Dendritic cell treated with granulocyte-macrophage colony-stimulating factor and Interleukin-4, amounts not matched to agents 40 ng/mL and 50 ng/mL, for 4 days (primary cell): ENCODE measurements at regions of chr5 and their contacts with region 1.

Region 1: GRCh38 chr5:66739951-66740350 is 143.8 kb downstream of the MAST4 start:
- H3K4me3 Mint-ChIP-seq: no peak overlapping the region
- H3K27ac Mint-ChIP-seq: no peak overlapping the region
- H3K4me1 Mint-ChIP-seq: peaks cover 72% of the 10 kb centered on the region
- H3K27me3 Mint-ChIP-seq: no peaks in the 10 kb centered on the region

Region 2: DNA sequence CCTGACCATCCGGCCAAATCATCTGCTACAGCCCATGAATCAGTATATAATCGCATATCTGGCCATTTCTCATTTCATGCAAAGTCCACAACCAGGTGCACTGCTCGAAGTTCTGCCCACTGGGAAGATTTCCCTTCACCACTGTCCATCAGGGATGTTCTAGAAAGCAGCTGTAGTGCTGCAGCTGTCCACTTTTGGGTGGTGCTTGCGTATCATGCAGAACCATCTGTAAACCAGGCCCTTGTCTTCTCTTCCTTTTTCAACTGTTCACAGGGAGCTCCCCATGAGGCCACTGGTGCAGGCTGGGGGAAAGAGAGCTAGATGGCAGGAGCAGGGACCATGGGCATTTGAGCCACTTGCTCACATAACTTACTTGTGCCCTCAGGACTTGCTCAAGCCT is 1250.8 kb before region 1 on chr5:
- intact Hi-C with region 1: no loop called
- H3K4me3 Mint-ChIP-seq: no peak overlapping the region
- H3K27ac Mint-ChIP-seq: no peak overlapping the region
- H3K4me1 Mint-ChIP-seq: no peaks in the 10 kb centered on the region
- H3K27me3 Mint-ChIP-seq: no peaks in the 10 kb centered on the region

Region 3: DNA sequence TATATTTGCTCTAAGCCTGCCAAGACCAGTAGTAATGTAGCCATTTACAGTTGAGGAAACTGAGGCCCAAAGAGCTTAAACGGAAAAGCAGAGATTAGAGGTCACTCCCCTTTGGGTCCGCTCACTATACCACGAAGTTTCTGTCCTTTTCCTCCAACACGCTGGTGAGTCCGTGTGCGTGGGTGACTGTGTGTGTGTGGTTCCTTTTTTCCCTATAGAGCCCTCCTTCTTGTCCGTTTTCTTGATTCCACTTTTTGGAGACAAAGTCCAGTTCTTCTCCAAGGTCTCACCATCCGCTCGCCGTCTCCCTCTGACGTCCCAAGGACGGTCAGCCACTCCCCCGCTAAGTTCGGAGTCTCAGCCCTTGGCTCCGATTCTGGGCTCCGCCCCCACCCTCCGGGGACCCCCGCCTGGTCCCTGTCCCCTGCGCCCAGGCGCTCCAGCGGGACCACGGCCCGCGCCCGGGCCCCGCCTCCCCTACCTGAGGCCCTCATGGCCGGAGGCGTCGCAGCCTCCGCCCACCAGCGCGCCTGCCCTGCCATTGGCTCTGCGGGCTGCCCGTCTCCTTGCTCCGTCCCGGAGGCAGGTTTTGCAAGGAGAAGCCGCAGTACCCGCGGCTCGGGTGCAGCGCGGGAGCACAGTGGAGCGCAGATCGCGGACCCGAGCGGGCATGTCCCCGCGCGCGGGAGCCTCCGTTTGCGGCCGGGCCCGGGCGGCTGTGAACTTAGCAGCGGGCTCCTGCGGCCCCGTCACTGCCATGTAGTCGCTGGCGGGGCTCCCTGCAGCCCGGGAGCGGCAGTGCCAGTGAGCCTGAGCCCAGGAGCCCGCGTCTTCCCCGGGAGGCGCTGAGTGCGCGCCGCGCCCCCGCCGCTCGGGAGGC is 144.0 kb before region 1 on chr5 and contains the start of gene MAST4:
- intact Hi-C with region 1: loop called (anchors 10 kb)
- H3K4me3 Mint-ChIP-seq: peak within 1 kb of the TSS; percentile 79
- H3K27ac Mint-ChIP-seq: no peak within 1 kb of the TSS
- H3K4me1 Mint-ChIP-seq: peaks cover 17% of the 10 kb centered on the region
- H3K27me3 Mint-ChIP-seq: peaks cover 73% of the 10 kb centered on the region